Right ventricle myocardium inferior (tissue), 1 donor: ENCODE measurements at regions of chr1 and their contacts with region 1.

Region 1: DNA sequence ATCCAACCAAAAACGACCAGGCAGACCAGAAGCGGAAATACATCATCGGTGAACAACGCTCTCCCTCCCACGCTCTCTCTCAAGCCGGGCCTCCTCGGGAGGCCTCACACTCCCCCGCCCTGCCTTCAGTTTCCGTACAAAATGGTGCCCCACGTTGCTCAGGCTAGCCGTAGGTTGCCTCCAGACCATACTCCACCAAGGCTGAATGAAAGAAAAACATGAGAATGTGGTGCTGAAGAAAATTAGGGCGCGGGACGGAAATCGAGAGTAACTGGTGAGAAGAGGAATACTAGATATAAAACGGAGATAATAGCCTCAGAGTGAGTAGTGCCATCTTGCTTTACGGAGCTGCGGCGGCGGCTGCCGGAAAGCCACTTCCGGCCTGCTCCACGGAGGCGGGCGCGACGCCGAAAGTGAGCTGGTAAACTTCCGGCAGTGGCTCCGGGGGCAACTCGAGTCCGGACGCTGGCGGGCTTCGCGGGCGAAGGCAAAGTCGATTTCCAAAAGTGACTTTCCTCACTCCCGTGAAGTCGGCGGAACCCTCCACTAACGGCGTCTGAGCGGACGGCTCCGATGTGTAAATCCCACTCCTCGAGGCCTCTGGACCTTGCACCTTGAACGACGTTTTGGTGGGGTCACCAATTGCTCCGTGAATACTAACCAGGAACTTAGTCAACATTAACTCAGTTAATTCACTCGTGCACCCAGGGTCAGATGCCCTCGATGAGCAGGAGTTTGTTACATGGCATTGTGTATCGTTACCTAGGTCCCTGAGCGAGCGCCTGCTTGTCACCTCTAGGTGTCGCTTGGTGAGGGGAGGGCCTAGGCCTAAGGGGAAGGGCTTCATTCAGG is at the start of gene SH3BP5L:
- DNase-seq: peak; percentile 96
- ATAC-seq: peak; percentile 97
- total RNA-seq, gene SH3BP5L: 22.2 TPM

Region 2: GRCh38 chr1:248802454-248802853 is 23.7 kb before region 1 on chr1:
- intact Hi-C with region 1: no loop called
- DNase-seq: no peak
- ATAC-seq: no peak

Region 3: GRCh38 chr1:248837794-248838356 is 11.7 kb after region 1 on chr1 and contains the start of gene ZNF672:
- intact Hi-C with region 1: loop called (anchors 1 kb)
- DNase-seq: peak; percentile 99
- ATAC-seq: peak; percentile 94
- total RNA-seq, gene ZNF672: 40.3 TPM

Region 4: DNA sequence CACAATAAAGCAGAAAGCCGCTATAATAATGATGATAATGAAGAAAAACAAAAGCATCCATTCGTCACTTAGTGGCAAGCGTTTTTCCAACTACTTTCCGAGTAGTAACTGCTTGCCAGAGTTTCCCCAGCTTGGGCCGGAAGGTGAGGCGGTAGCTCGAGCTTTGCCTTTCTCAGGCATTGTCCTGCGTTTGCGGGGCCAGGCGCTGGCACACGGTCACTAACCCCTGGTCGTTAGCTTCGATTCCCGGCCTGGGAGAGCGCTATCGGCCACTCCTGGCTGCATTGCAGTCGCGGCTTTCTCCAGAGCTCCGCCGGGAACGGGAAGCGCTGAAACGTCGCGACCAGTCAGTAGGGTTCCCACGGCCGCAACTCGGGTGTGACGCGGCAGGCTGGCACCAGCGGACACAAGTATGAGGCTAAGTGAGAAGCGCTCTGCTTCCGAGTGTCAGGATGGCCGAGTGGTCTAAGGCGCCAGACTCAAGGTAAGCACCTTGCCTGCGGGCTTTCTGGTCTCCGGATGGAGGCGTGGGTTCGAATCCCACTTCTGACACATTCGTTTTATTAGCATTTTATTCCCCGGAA is 47.4 kb after region 1 on chr1:
- intact Hi-C with region 1: loop called (anchors 1 kb)
- DNase-seq: peak; percentile 96
- ATAC-seq: peak; percentile 94

Region 5: GRCh38 chr1:248913933-248914332 is 87.8 kb after region 1 on chr1:
- intact Hi-C with region 1: no loop called
- DNase-seq: no peak
- ATAC-seq: no peak